ENCODE measurements at regions of chr4 and their contacts with region 1.

Region 1: DNA sequence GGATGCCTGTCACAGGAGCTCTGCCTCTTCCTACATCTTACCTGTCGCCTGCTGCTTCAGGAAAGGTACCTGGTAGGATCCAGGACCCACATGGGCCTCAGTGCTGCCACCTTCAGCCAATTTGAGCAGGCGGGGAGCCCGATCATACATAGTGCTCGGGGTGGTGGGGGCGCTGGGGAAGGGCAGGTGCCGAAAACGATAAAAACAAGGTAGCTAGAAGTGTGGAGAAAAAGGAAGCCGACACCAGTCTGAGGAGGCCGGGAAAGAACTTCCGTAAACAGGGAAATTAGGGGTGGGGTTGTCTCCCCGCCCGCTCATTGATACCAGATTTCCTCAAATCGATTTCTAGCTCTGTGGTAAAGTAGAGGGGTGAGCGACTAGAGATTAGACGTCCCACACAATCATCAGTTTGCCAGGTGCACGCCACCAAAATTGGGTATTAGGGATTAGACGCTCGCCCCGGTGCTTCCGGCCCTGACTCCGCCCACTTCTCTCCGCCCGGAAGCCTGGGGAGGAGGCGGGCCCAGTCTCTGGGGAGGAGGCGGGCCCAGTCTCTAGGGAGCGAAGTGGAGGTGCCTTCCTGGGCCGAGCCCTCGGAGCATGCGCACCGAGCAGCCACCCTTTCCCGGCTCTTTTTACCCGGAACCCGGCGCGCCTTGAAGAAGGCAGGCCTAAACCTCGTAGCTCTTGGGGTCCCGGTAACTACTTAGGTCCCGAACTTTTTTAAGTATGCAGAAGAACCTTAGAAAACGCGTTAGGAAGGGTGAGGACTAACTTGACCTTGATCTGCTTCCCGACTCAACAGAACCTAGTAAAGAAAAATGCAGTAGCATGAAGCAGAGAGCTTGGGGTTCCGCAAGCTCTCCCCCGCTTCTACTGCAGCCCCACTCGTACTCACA is at the start of gene STPG2:
- DNase-seq: peak; percentile 83 to 90
- H3K4me3 ChIP-seq: peak within 1 kb of the TSS; percentile 63
- H3K27ac ChIP-seq: peak within 1 kb of the TSS; percentile 89
- H3K4me1 ChIP-seq: peaks cover 21% of the 10 kb centered on the region
- H3K27me3 ChIP-seq: no peaks in the 10 kb centered on the region
- CTCF ChIP-seq: peak; percentile 79
- total RNA-seq, gene STPG2: 0.35 TPM in 1 of 2 replicates, not detected in the other

Region 2: DNA sequence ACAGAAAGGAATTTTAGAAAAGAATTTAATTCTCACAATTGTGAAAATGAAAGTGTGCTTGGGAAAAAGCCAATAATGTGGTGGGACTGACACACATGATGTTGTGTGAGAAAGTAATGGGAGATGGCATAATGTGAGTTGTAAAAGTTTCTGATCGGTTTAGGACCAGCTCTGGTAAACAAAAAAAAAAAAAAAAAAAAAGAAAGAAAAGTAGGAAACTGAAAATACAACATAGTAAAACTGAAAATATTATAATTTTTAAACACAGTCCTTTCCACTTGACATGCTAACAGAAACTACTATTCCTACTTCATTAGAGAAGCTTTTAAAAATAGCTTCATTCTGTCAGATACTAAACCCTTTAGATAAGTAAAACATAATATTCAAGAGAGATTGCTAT is 146.1 kb after region 1 on chr4:
- CTCF ChIA-PET with region 1: no interaction called
- POLR2A ChIA-PET with region 1: interaction called, 50 read pairs
- intact Hi-C with region 1: no loop called
- DNase-seq: no peak
- H3K4me3 ChIP-seq: no peak overlapping the region
- H3K27ac ChIP-seq: no peak overlapping the region
- H3K4me1 ChIP-seq: peaks cover 4% of the 10 kb centered on the region; the same call in 1 of the 2 replicates
- H3K27me3 ChIP-seq: no peaks in the 10 kb centered on the region
- CTCF ChIP-seq: no peak

Region 3: GRCh38 chr4:98658287-98659105 is 515.2 kb after region 1 on chr4 and contains the start of gene TSPAN5:
- CTCF ChIA-PET with region 1: no interaction called
- POLR2A ChIA-PET with region 1: no interaction called
- intact Hi-C with region 1: loop called (anchors 10 kb)
- DNase-seq: peak; percentile 65 to 78
- H3K4me3 ChIP-seq: peak within 1 kb of the TSS; percentile 95
- H3K27ac ChIP-seq: peak within 1 kb of the TSS; percentile 65
- H3K4me1 ChIP-seq: peaks cover 80% of the 10 kb centered on the region
- H3K27me3 ChIP-seq: no peaks in the 10 kb centered on the region
- CTCF ChIP-seq: no peak
- total RNA-seq, gene TSPAN5: 9.8 and 12.4 TPM in 2 replicates

Region 4: GRCh38 chr4:99405433-99406115 is 1262.3 kb after region 1 on chr4:
- CTCF ChIA-PET with region 1: no interaction called
- POLR2A ChIA-PET with region 1: no interaction called
- intact Hi-C with region 1: loop called (anchors 5 kb)
- DNase-seq: peak; percentile 51 to 54
- H3K4me3 ChIP-seq: no peak overlapping the region
- H3K27ac ChIP-seq: 0 out of 2 replicates have a peak overlapping the region, but pooled peaks have one; percentile 21
- H3K4me1 ChIP-seq: peaks cover 12% of the 10 kb centered on the region
- H3K27me3 ChIP-seq: no peaks in the 10 kb centered on the region
- CTCF ChIP-seq: peak; percentile 93

Measured in PC-9 (cell line).